Caco-2 (cell line): ENCODE measurements at regions of chr10 and their contacts with region 1.

Region 1: DNA sequence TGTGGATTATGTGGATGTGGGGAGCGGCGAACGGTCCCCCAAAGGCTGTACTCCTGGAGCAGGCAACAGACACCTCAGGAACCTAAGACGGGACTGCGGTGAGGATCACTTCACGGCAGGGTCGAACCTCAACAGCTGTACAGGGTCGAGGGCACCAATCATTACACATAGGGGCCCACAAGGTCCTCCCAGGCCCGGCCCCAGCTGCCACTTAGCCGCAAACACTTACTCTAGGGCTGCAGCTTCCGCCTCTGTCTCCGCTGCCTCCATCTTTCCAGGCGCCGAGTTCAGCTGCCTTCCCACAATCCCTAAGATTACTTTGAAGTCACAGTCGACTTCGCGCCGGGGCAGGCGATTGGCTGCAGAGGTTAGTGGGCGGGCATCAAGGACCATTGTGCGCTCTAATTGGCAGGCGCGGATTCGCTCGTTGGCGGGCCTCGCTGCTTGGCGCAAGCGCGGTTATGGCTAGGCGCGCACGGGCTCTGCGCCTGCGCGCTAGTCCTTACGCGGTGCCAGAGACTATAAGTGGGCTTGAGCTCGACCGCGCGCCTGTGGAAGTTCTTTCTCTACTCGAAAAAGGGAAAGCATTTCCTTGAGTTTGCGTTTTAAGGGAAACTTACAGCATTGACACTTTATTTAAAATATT is at the start of gene ZWINT:
- DNase-seq: peak; percentile 99
- H3K4me3 ChIP-seq: peak within 1 kb of the TSS; percentile 83
- H3K4me3 Mint-ChIP-seq: peak within 1 kb of the TSS; percentile 80
- H3K27ac Mint-ChIP-seq: peak within 1 kb of the TSS; percentile 84
- H3K4me1 ChIP-seq: 0 out of 2 replicates have a peak, but pooled peaks cover 7% of the 10 kb centered on the region
- H3K4me1 Mint-ChIP-seq: peaks cover 12% of the 10 kb centered on the region
- H3K27me3 ChIP-seq: no peaks in the 10 kb centered on the region
- H3K27me3 Mint-ChIP-seq: no peaks in the 10 kb centered on the region
- CTCF ChIP-seq: no peak
- total RNA-seq, gene ZWINT: 168 and 181 TPM in 2 replicates

Region 2: GRCh38 chr10:55979203-55979602 is 381.9 kb before region 1 on chr10:
- CTCF ChIA-PET with region 1: no interaction called
- POLR2A ChIA-PET with region 1: no interaction called
- intact Hi-C with region 1: loop called (anchors 5 kb)
- DNase-seq: peak; percentile 69 to 79
- H3K4me3 ChIP-seq: no peak overlapping the region
- H3K4me3 Mint-ChIP-seq: no peak overlapping the region
- H3K27ac Mint-ChIP-seq: no peak overlapping the region
- H3K4me1 ChIP-seq: peaks cover 16% of the 10 kb centered on the region
- H3K4me1 Mint-ChIP-seq: no peaks in the 10 kb centered on the region
- H3K27me3 ChIP-seq: no peaks in the 10 kb centered on the region
- H3K27me3 Mint-ChIP-seq: no peaks in the 10 kb centered on the region
- CTCF ChIP-seq: no peak

Region 3: GRCh38 chr10:56349611-56350010 is 11.5 kb before region 1 on chr10:
- CTCF ChIA-PET with region 1: interaction called, 3 read pairs
- POLR2A ChIA-PET with region 1: interaction called, 11 read pairs
- intact Hi-C with region 1: no loop called
- DNase-seq: no peak
- H3K4me3 ChIP-seq: no peak overlapping the region
- H3K4me3 Mint-ChIP-seq: no peak overlapping the region
- H3K27ac Mint-ChIP-seq: no peak overlapping the region
- H3K4me1 ChIP-seq: no peaks in the 10 kb centered on the region
- H3K4me1 Mint-ChIP-seq: no peaks in the 10 kb centered on the region
- H3K27me3 ChIP-seq: no peaks in the 10 kb centered on the region
- H3K27me3 Mint-ChIP-seq: no peaks in the 10 kb centered on the region
- CTCF ChIP-seq: no peak

Region 4: GRCh38 chr10:56507033-56507432 is 145.9 kb after region 1 on chr10:
- CTCF ChIA-PET with region 1: no interaction called
- POLR2A ChIA-PET with region 1: no interaction called
- intact Hi-C with region 1: no loop called
- DNase-seq: no peak
- H3K4me3 ChIP-seq: no peak overlapping the region
- H3K4me3 Mint-ChIP-seq: no peak overlapping the region
- H3K27ac Mint-ChIP-seq: no peak overlapping the region
- H3K4me1 ChIP-seq: no peaks in the 10 kb centered on the region
- H3K4me1 Mint-ChIP-seq: no peaks in the 10 kb centered on the region
- H3K27me3 ChIP-seq: no peaks in the 10 kb centered on the region
- H3K27me3 Mint-ChIP-seq: no peaks in the 10 kb centered on the region
- CTCF ChIP-seq: no peak